HepG2 (cell line): ENCODE measurements at regions of chr16 and their contacts with region 1.

Region 1: GRCh38 chr16:82082543-82083244 is 47.6 kb downstream of the HSD17B2 start:
- DNase-seq: peak; percentile 97
- ATAC-seq: peak; percentile 90
- H3K4me3 ChIP-seq: no peak overlapping the region
- H3K27ac ChIP-seq: no peak overlapping the region
- H3K4me1 ChIP-seq: peaks cover 63% of the 10 kb centered on the region
- H3K27me3 ChIP-seq: no peaks in the 10 kb centered on the region
- CTCF ChIP-seq: no peak
- EP300 ChIP-seq: peak in 1 of 2 experiments; percentile 93; a peak in 2 of 4 replicates
- POLR2A ChIP-seq: 0 out of 4 replicates have a peak, but pooled peaks of 1 of the 2 experiments have one; percentile 2
- RAD21 ChIP-seq: no peak

Region 2: GRCh38 chr16:82050909-82051357 is 31.8 kb before region 1 on chr16:
- CTCF ChIA-PET with region 1: no interaction called
- POLR2A ChIA-PET with region 1: interaction called, 12 read pairs
- in situ Hi-C with region 1: no loop called
- intact Hi-C with region 1: no loop called
- DNase-seq: peak; percentile 92
- ATAC-seq: peak; percentile 66
- H3K4me3 ChIP-seq: peak overlapping the region in 1 of 3 experiments; percentile 27; a peak in 1 of 6 replicates
- H3K27ac ChIP-seq: peak overlapping the region; percentile 64
- H3K4me1 ChIP-seq: peaks cover 100% of the 10 kb centered on the region
- H3K27me3 ChIP-seq: no peaks in the 10 kb centered on the region
- CTCF ChIP-seq: no peak
- EP300 ChIP-seq: peak in 1 of 2 experiments; percentile 89; a peak in 2 of 4 replicates
- POLR2A ChIP-seq: no peak
- RAD21 ChIP-seq: no peak

Region 3: DNA sequence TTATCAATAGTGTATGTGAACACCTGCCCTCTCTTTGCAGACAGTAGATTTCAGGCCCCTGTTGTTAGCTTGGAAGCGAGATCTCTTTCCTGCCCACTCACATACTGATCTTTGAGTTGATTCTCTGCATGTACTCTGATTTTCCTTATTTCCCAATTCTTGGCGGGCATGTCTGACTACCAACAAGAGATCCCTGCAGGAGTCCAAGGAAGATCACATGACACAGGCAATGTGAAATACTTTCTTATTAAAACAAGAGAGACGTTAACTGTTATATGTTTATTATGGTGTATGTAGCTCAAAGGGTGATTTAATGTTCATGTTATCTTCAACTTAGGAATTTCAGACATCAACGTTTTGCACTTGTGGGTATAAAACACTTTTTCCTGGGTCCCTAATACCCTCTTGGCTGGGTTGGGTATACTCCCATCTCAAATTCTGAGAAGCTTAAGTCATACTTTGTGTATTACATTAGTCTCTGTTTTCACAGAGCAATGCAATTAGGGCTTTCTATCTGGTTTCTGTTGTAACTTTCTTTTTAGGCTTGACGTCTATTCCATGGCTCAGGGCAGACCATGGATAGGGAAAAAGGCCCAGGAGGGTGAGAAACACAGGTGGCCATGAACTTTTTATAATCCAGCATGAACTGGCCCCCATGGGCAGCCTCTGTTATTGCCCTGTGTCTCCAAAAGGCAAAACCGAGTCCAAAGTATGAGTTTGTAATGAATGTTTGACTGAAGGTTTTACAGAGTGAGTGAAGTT is 15.5 kb before region 1 on chr16:
- CTCF ChIA-PET with region 1: no interaction called
- POLR2A ChIA-PET with region 1: interaction called, 14 read pairs
- in situ Hi-C with region 1: no loop called
- intact Hi-C with region 1: loop called (anchors 2 kb)
- DNase-seq: peak; percentile 81
- ATAC-seq: peak; percentile 84
- H3K4me3 ChIP-seq: no peak overlapping the region
- H3K27ac ChIP-seq: peak overlapping the region; percentile 64
- H3K4me1 ChIP-seq: peaks cover 58% of the 10 kb centered on the region
- H3K27me3 ChIP-seq: no peaks in the 10 kb centered on the region
- CTCF ChIP-seq: no peak
- EP300 ChIP-seq: peak in 1 of 2 experiments; percentile 76; a peak in 2 of 4 replicates
- POLR2A ChIP-seq: no peak
- RAD21 ChIP-seq: no peak

Region 4: DNA sequence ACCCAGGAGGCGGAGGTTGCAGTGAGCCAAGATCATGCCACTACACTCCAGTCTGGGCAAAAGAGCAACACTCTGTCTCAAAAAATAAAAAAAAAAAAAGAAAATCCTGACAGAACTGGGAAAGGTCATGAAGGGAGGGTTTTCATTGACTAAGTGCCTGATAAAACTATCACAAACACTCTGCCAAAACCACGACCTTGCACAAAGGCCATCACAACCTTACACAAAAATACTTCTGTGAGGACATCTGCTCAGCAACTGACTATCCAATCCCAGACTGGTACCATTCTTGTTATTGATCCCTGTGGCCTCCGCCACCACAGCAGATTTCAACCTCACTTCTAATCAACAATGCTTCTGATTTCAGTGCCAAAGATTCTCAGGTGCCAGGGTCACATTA is 47.2 kb after region 1 on chr16:
- CTCF ChIA-PET with region 1: no interaction called
- POLR2A ChIA-PET with region 1: no interaction called
- in situ Hi-C with region 1: no loop called
- intact Hi-C with region 1: no loop called
- DNase-seq: no peak
- ATAC-seq: no peak; the same call in 2 of the 3 replicates
- H3K4me3 ChIP-seq: no peak overlapping the region
- H3K27ac ChIP-seq: no peak overlapping the region
- H3K4me1 ChIP-seq: 0 out of 2 replicates have a peak, but pooled peaks cover 5% of the 10 kb centered on the region
- H3K27me3 ChIP-seq: no peaks in the 10 kb centered on the region
- CTCF ChIP-seq: no peak
- EP300 ChIP-seq: no peak
- POLR2A ChIP-seq: no peak
- RAD21 ChIP-seq: no peak